Dendritic cell treated with granulocyte-macrophage colony-stimulating factor and Interleukin-4, amounts not matched to agents 40 ng/mL and 50 ng/mL, for 4 days (primary cell): ENCODE measurements at regions of chr2 and their contacts with region 1.

Region 1: DNA sequence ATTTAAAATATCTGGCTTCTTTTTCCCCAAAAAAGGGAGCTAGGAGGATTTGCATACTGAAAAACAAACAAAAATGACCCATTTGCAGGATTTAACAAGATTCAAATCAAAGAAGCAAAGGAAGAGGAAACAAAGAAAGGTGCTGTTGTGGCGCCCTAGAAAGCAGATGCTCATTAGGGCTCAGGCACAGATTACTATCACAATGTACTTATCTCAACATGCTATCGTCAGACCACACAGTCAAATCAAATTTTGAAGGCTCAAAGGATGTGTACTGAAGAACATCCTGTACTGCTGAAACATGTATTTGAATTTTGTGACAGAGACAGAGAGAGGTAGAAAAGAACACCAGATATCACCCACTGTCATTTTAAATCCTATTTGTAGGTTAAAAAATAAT is 10.9 kb downstream of the RBMS1 start:
- H3K4me3 Mint-ChIP-seq: no peak overlapping the region
- H3K27ac Mint-ChIP-seq: no peak overlapping the region
- H3K4me1 Mint-ChIP-seq: no peaks in the 10 kb centered on the region
- H3K27me3 Mint-ChIP-seq: no peaks in the 10 kb centered on the region

Region 2: DNA sequence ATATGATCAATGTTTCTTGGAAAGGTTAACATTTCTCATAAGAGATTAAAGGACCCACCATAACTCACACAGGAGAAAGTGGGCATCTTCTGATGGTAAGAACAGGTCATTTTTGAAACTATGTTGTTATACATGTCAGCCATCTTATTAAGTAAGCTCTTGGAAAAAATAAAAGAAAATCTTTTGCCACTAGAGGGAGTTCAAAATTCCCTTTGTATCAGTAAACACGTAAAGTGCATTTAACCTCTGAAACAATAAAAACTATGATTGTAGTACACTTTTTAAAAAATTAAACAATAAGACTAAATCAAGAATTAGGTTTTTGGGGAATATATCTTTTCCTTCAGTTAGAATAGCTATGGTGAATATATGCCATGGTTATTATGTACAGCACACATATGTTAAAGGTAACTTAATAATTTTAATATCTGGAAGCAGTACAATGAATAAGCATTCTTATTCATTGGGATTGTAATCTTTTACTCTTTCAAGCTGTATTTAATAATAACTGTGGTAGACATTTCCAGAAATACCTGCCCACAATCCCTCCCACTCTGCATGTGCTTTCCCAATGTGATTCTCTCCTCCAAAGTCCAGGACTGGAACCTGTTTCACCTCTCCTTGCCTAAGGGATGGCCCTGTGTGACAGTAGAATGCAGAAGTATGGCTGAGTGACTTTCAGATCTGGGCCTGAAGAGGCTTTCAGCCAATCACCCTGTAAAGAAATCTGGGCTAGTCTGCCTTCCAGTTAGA is 53.2 kb before region 1 on chr2:
- intact Hi-C with region 1: loop called (anchors 10 kb)
- H3K4me3 Mint-ChIP-seq: no peak overlapping the region
- H3K27ac Mint-ChIP-seq: no peak overlapping the region
- H3K4me1 Mint-ChIP-seq: peaks cover 13% of the 10 kb centered on the region
- H3K27me3 Mint-ChIP-seq: no peaks in the 10 kb centered on the region